Heart left ventricle (tissue), 16 donors: ENCODE measurements at regions of chr5 and their contacts with region 1.

Region 1: GRCh38 chr5:39526914-39527477 is 102.2 kb upstream of the DAB2 start:
- DNase-seq: peak in 2 of 5 donors; percentile 33 to 35
- ATAC-seq: peak; percentile 78 to 95 (median 84)
- H3K4me3 ChIP-seq: no peak overlapping the region
- H3K27ac ChIP-seq: peak overlapping the region in 11 of 12 donors; percentile 36 to 91 (median 66)
- H3K4me1 ChIP-seq: peaks cover 0 to 37% (median 2%) of the 10 kb centered on the region in 12 donors
- H3K27me3 ChIP-seq: no peaks in the 10 kb centered on the region
- CTCF ChIP-seq: no peak
- POLR2A ChIP-seq: no peak

Region 2: DNA sequence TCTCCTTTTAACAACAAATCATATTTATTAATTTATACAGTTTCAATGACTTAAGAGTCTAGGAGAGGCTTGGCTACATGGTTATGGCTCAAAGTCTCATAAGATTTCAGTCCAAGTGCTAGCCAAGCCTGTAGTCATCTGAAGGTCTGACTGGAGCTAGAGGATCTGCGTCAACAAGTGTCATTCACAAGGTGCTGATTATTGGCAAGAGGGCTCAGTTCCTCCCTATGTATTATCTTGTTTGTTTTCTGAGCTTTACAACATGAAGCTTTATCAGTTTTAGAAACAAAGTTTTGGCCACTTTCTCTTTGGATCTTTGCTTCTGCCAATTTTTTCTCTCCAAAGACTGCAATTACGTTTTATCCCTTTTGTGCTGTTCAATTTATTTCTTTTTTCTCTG is 547.5 kb before region 1 on chr5:
- intact Hi-C with region 1: loop called in 1 of 10 experiments (anchors 5 kb)
- DNase-seq: no peak
- ATAC-seq: peak in 1 of 4 donors; percentile 26
- H3K4me3 ChIP-seq: no peak overlapping the region
- H3K27ac ChIP-seq: no peak overlapping the region
- H3K4me1 ChIP-seq: no peaks in the 10 kb centered on the region
- H3K27me3 ChIP-seq: no peaks in the 10 kb centered on the region
- CTCF ChIP-seq: no peak
- POLR2A ChIP-seq: no peak

Region 3: DNA sequence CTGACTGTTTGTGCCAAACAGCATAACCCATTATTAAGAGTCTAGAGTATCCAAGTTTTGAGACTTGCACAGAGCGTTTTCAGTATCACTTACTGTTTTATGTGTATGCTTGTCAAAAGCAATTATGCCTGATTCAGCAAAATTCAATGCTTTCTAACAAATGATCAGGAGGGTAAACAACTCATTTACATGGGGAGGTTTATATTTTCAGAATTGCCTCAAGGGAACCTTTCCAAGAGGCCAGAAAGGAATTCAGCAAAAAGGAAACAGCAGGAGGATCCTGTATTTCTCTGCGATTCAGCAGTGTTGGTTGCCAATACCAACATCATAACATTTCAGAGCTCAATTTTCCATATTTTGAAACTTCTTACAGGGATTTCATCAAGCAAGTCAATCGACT is 32.9 kb before region 1 on chr5:
- intact Hi-C with region 1: no loop called
- DNase-seq: no peak
- ATAC-seq: peak in 3 of 4 donors; percentile 18 to 33 (median 24)
- H3K4me3 ChIP-seq: no peak overlapping the region
- H3K27ac ChIP-seq: peak overlapping the region in 5 of 12 donors; percentile 2 to 69 (median 17)
- H3K4me1 ChIP-seq: peaks cover 0 to 38% (median 4%) of the 10 kb centered on the region in 12 donors
- H3K27me3 ChIP-seq: no peaks in the 10 kb centered on the region
- CTCF ChIP-seq: no peak
- POLR2A ChIP-seq: no peak

Region 4: GRCh38 chr5:40288800-40289485 is 761.9 kb after region 1 on chr5:
- intact Hi-C with region 1: no loop called
- DNase-seq: no peak
- ATAC-seq: no peak
- H3K4me3 ChIP-seq: no peak overlapping the region
- H3K27ac ChIP-seq: no peak overlapping the region
- H3K4me1 ChIP-seq: no peaks in the 10 kb centered on the region
- H3K27me3 ChIP-seq: no peaks in the 10 kb centered on the region
- CTCF ChIP-seq: no peak
- POLR2A ChIP-seq: no peak